Activated CD4-positive, alpha-beta T cell treated with anti-CD3 and anti-CD28 coated beads for 36 hours (primary cell): ENCODE measurements at regions of chr19 and their contacts with region 1.

Region 1: DNA sequence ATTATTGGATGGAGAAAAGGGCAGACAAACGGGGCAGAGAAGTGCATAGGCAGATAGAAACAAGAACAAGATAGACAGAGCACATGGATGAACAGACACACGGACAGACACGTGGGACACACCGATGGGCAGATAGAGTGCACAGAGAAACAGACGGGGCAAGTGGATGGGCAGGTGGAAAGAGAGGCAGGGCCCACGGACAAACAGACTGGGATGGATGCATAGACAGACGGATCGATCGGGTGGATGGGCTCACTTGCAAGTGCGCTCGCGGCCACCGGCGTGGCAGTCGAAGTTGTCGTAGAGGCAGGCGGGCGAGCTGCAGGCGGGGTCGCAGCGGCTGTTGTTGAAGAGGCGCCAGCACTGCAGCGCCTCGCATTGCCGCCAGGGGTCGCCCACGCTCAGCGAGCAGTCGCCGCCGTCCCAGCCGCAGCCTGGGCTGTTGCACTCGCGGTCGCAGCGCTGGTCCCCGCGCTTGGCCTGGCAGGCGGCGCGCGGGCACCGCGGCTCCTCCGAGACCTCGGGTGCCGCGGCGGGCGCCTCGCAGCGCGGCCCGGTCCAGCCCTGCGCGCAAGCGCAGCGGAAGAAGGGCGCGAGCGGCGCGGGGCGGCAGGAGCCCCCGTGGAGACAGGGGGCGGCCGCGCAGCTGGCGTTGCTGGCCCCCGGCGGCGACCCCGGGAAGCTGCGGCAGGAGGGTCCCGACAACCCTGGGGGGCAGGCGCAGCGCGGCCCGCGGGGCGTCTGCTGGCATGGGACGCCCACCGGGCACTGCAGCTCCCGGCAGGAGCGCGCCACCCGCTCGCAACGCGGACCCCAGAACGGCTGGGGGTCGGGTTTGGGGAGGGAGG is 23.3 kb downstream of the NOTCH3 start:
- DNase-seq: peak; percentile 92
- ATAC-seq: peak; percentile 98
- H3K4me3 Mint-ChIP-seq: peak overlapping the region; percentile 7
- H3K27ac Mint-ChIP-seq: no peak overlapping the region
- H3K4me1 Mint-ChIP-seq: peaks cover 4% of the 10 kb centered on the region
- H3K27me3 Mint-ChIP-seq: peaks cover 13% of the 10 kb centered on the region

Region 2: DNA sequence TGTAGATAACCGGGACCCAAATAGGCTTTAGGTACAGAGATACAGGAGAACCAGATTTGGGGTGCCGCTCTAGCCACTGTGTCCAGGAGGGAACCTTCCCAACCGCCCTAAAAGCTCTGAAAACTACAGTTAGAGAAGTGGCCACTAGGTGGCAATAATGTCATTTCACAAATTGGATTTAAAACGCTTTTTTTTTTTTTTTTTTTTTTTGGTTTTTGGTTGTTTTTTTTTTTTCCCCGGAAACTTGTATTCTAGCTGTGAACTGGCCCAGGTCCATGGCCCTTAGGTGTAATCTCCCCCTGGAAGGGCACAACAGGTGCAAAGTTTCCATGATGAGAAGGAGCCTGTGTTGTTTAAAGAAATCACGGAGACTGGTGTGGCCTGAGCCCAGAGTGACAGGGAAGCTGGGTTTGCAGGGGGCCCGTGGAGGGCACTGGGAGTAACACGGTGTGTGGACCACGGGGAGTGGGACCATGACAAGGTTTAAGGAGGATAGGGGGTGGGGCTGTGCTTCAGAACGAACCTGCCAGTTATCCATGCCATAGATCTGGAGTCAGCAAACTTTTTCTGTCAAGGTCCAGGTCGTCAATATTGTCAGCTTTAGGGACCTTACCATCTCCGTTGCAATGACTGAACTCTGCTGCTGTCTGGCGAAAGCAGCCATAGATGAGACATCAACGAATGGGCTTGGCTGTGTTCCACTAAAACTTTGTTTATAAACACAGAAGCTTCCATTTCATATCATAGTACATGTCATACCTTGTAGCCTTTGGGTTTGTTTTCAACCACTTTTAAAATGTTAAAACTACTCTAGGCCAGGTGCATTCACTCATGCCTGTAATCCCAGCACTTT is 85.4 kb before region 1 on chr19:
- CTCF ChIA-PET with region 1: interaction called, 3 read pairs
- POLR2A ChIA-PET with region 1: no interaction called
- intact Hi-C with region 1: loop called in 1 of 2 experiments (anchors 1 kb)
- DNase-seq: peak; percentile 60
- ATAC-seq: peak; percentile 63
- H3K4me3 Mint-ChIP-seq: no peak overlapping the region
- H3K27ac Mint-ChIP-seq: no peak overlapping the region
- H3K4me1 Mint-ChIP-seq: peaks cover 5% of the 10 kb centered on the region
- H3K27me3 Mint-ChIP-seq: peaks cover 8% of the 10 kb centered on the region

Region 3: GRCh38 chr19:15107061-15108010 is 70.2 kb before region 1 on chr19 and contains the start of gene SYDE1:
- CTCF ChIA-PET with region 1: no interaction called
- POLR2A ChIA-PET with region 1: no interaction called
- intact Hi-C with region 1: no loop called
- DNase-seq: peak; percentile 76
- ATAC-seq: peak; percentile 81
- H3K4me3 Mint-ChIP-seq: peak within 1 kb of the TSS; percentile 72
- H3K27ac Mint-ChIP-seq: peak within 1 kb of the TSS; percentile 76
- H3K4me1 Mint-ChIP-seq: peaks cover 14% of the 10 kb centered on the region
- H3K27me3 Mint-ChIP-seq: peaks cover 10% of the 10 kb centered on the region
- total RNA-seq, gene SYDE1: 2.1 to 3.3 TPM

Region 4: GRCh38 chr19:15234043-15234873 is 56.8 kb after region 1 on chr19:
- CTCF ChIA-PET with region 1: no interaction called
- POLR2A ChIA-PET with region 1: no interaction called
- intact Hi-C with region 1: loop called in 1 of 2 experiments (anchors 5 kb)
- DNase-seq: no peak
- ATAC-seq: no peak
- H3K4me3 Mint-ChIP-seq: no peak overlapping the region
- H3K27ac Mint-ChIP-seq: no peak overlapping the region
- H3K4me1 Mint-ChIP-seq: peaks cover 11% of the 10 kb centered on the region
- H3K27me3 Mint-ChIP-seq: peaks cover 22% of the 10 kb centered on the region

Region 5: DNA sequence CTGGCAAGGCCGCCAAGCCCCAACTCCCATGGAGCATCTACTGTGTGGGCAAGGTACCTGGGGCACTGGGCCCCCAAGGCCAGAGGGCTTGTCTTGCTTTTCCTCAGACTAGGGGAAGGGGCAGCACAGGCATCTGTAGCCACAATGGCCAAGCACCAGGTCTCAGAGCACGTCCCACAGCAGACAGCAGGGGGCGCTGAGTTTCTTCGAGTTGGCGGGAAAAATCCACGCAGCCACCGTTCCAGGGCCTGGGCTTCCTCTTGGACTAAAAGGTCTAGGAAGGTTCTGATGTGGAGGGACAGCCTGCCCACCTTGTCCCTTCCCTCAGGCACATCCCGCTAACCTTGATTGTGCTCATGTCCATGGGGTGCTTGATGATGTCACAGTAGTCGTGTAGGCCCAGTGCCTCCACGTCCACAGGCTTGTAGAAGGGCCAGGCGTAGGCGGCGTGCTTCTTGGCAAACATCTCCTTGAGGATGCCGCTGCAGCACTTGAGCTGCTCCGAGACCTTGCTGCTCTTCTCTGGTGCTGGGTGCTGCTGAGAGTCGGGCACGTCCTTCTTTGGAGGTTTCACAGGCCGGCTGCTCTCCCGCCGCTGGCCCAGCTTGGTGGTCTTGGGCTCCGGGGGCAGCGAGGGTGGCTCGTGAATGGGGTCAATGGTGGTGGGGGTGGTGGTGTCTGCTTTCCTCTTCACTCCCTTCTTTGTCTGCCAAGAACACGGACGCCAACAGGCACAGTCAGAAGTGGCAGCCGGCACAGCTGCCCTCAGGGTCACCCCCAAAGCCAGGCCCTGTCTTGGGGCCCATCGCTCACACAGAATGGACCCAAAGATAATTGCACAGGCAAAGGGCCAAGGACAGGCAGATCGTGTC is 86.8 kb after region 1 on chr19:
- CTCF ChIA-PET with region 1: no interaction called
- POLR2A ChIA-PET with region 1: no interaction called
- intact Hi-C with region 1: loop called in 1 of 2 experiments (anchors 5 kb)
- DNase-seq: peak; percentile 86
- ATAC-seq: peak; percentile 77
- H3K4me3 Mint-ChIP-seq: no peak overlapping the region
- H3K27ac Mint-ChIP-seq: no peak overlapping the region
- H3K4me1 Mint-ChIP-seq: peaks cover 8% of the 10 kb centered on the region
- H3K27me3 Mint-ChIP-seq: no peaks in the 10 kb centered on the region

Region 6: DNA sequence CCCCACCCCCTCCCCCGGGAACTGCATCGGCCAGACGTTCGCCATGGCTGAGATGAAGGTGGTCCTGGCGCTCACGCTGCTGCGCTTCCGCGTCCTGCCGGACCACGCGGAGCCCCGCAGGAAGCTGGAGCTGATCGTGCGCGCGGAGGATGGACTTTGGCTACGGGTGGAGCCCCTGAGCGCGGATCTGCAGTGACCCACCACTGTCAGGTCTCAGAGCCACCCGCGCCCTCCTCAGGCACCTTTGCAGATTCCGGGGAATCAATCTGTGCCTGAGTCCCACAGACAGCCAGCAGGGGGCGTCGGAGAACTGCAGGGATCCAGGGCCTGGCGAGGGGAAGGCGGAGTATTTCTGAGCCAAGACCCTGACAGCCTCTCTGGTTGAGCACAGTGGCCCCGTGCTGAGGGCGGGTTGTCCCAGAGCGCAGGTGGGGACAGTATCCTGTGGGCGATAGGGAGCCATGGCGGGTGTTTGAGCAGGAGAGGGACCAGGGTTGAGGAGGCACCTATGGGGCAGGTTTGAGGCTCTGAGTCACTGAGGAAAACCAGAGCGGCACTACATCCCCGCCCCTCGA is 407.1 kb after region 1 on chr19:
- CTCF ChIA-PET with region 1: no interaction called
- POLR2A ChIA-PET with region 1: no interaction called
- intact Hi-C with region 1: loop called in 1 of 2 experiments (anchors 1 kb)
- DNase-seq: peak; percentile 92
- ATAC-seq: peak; percentile 99
- H3K4me3 Mint-ChIP-seq: peak overlapping the region; percentile 36
- H3K27ac Mint-ChIP-seq: no peak overlapping the region
- H3K4me1 Mint-ChIP-seq: peaks cover 3% of the 10 kb centered on the region
- H3K27me3 Mint-ChIP-seq: peaks cover 16% of the 10 kb centered on the region